CD4-positive, alpha-beta memory T cell (primary cell): ENCODE measurements at regions of chr12 and their contacts with region 1.

Region 1: DNA sequence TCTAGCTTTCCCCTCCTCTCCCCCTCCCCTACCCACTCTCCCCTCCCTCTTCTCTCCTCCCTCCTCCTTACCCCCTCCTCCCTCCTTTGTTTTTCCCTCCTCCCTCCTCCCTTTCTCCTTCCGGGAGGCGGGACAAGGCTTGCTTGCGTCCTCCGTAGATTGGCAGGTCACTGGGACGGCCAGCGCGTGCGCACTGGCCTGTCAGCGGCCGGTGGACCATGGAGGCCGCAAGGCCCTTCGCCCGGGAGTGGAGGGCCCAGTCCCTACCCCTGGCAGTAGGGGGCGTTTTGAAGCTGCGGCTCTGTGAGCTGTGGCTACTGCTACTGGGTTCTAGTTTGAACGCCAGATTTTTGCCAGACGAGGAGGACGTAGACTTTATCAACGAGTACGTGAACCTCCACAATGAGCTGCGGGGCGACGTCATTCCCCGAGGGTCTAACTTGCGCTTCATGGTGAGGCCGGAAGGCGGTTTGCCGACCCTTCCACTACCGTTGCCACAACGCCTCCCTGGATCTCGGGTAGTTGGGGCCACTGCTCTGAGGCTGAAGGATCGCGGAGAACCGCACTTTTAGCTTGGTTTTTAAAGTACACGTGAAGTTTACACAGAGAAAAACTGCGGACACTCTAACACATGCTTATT is at the start of gene GLIPR1L2:
- DNase-seq: peak; percentile 82 to 86 (median 84)
- H3K4me3 ChIP-seq: peak within 1 kb of the TSS; percentile 69 to 74
- H3K4me3 Mint-ChIP-seq: peak within 1 kb of the TSS; percentile 90 to 97 (median 93)
- H3K27ac ChIP-seq: peak within 1 kb of the TSS; percentile 74
- H3K27ac Mint-ChIP-seq: peak within 1 kb of the TSS; percentile 96 to 99 (median 97)
- H3K4me1 ChIP-seq: peaks cover 56% of the 10 kb centered on the region
- H3K4me1 Mint-ChIP-seq: peaks cover 38 to 71% (median 51%) of the 10 kb centered on the region in 4 donors
- H3K27me3 ChIP-seq: no peaks in the 10 kb centered on the region
- H3K27me3 Mint-ChIP-seq: no peaks in the 10 kb centered on the region
- total RNA-seq, gene GLIPR1L2: 0.47 to 0.55 TPM

Region 2: DNA sequence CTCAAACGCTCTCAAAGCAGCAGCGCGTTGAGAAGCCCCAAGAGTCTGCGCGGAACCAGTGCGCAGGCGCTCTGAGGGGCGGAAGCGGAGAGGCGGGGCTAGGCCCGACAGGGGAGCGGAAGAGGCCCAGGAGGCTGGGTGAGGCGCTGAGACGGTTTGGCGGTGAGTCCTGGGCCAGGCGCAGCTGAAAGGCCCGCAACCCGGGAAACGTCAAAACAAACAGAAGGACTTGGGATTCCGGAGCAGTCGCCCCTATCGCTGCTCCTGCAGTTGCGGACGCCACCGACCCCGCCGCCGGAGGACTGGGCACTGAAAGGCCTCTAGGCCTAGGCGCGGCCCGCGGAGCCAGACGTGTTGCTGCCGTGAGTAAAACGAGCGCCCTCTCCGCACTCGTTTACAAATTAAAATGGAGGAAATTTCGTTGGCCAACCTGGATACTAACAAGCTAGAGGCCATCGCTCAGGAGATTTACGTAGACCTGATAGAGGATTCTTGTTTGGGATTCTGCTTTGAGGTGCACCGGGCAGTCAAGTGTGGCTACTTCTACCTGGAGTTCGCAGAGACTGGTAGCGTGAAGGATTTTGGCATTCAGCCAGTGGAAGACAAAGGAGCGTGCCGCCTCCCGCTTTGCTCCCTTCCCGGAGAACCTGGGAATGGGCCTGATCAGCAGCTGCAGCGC is 853.2 kb before region 1 on chr12 and contains the start of gene ATXN7L3B:
- CTCF ChIA-PET with region 1: no interaction called
- POLR2A ChIA-PET with region 1: interaction called, 3 read pairs
- intact Hi-C with region 1: loop called (anchors 5 kb)
- DNase-seq: peak; percentile 95 to 97 (median 97)
- H3K4me3 ChIP-seq: peak within 1 kb of the TSS; percentile 92 to 99
- H3K4me3 Mint-ChIP-seq: peak within 1 kb of the TSS; percentile 81 to 99 (median 96)
- H3K27ac ChIP-seq: peak within 1 kb of the TSS; percentile 95
- H3K27ac Mint-ChIP-seq: peak within 1 kb of the TSS; percentile 97 to 100 (median 99)
- H3K4me1 ChIP-seq: peaks cover 48% of the 10 kb centered on the region
- H3K4me1 Mint-ChIP-seq: peaks cover 39 to 60% (median 49%) of the 10 kb centered on the region in 4 donors
- H3K27me3 ChIP-seq: no peaks in the 10 kb centered on the region
- H3K27me3 Mint-ChIP-seq: no peaks in the 10 kb centered on the region
- total RNA-seq, gene ATXN7L3B: 45.1 to 46.2 TPM

Region 3: GRCh38 chr12:75407683-75408082 is 16.7 kb after region 1 on chr12:
- CTCF ChIA-PET with region 1: interaction called, 11 read pairs
- POLR2A ChIA-PET with region 1: interaction called, 3 read pairs
- intact Hi-C with region 1: no loop called
- DNase-seq: no peak
- H3K4me3 ChIP-seq: no peak overlapping the region
- H3K4me3 Mint-ChIP-seq: no peak overlapping the region
- H3K27ac ChIP-seq: no peak overlapping the region
- H3K27ac Mint-ChIP-seq: no peak overlapping the region
- H3K4me1 ChIP-seq: no peaks in the 10 kb centered on the region
- H3K4me1 Mint-ChIP-seq: no peaks in the 10 kb centered on the region
- H3K27me3 ChIP-seq: no peaks in the 10 kb centered on the region
- H3K27me3 Mint-ChIP-seq: peaks cover 0 to 6% of the 10 kb centered on the region in 2 donors

Region 4: DNA sequence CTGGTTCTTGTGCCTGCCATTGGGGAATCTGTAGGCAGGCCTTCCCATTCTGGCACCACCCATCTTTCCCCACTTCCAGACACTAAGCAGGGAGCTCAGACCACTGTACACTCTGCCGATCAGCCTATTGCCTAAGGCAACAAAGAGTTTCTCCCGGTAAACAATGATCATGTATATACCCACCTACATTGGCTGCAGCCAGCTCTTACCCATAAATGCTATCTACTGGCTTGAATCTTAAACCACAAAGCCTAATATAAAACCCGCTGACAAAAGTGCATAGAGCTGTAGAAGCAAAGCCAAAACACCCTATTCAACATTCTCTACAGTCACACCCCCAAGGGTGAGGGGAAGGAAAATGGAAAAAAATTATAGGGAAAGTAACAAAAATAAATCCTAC is 68.7 kb after region 1 on chr12:
- CTCF ChIA-PET with region 1: interaction called, 12 read pairs
- POLR2A ChIA-PET with region 1: interaction called, 4 read pairs
- intact Hi-C with region 1: no loop called
- DNase-seq: no peak
- H3K4me3 ChIP-seq: peak overlapping the region in 1 of 2 donors; percentile 11
- H3K4me3 Mint-ChIP-seq: peak overlapping the region in 7 of 8 donors; percentile 19 to 79 (median 64)
- H3K27ac ChIP-seq: no peak overlapping the region
- H3K27ac Mint-ChIP-seq: peak overlapping the region; percentile 2 to 88 (median 72)
- H3K4me1 ChIP-seq: peaks cover 48% of the 10 kb centered on the region
- H3K4me1 Mint-ChIP-seq: peaks cover 42 to 70% (median 55%) of the 10 kb centered on the region in 4 donors
- H3K27me3 ChIP-seq: no peaks in the 10 kb centered on the region
- H3K27me3 Mint-ChIP-seq: no peaks in the 10 kb centered on the region

Region 5: GRCh38 chr12:75505706-75506312 is 114.8 kb after region 1 on chr12:
- CTCF ChIA-PET with region 1: interaction called, 15 read pairs
- POLR2A ChIA-PET with region 1: interaction called, 35 read pairs
- intact Hi-C with region 1: loop called (anchors 1 kb)
- DNase-seq: peak in 4 of 5 donors; percentile 28 to 37 (median 36)
- H3K4me3 ChIP-seq: no peak overlapping the region
- H3K4me3 Mint-ChIP-seq: no peak overlapping the region
- H3K27ac ChIP-seq: no peak overlapping the region
- H3K27ac Mint-ChIP-seq: peak overlapping the region; percentile 12 to 64 (median 52)
- H3K4me1 ChIP-seq: peaks cover 19% of the 10 kb centered on the region
- H3K4me1 Mint-ChIP-seq: peaks cover 22 to 30% (median 25%) of the 10 kb centered on the region in 4 donors
- H3K27me3 ChIP-seq: no peaks in the 10 kb centered on the region
- H3K27me3 Mint-ChIP-seq: no peaks in the 10 kb centered on the region

Region 6: GRCh38 chr12:76548222-76548837 is 1157.3 kb after region 1 on chr12:
- CTCF ChIA-PET with region 1: no interaction called
- POLR2A ChIA-PET with region 1: no interaction called
- intact Hi-C with region 1: no loop called
- DNase-seq: no peak
- H3K4me3 ChIP-seq: no peak overlapping the region
- H3K4me3 Mint-ChIP-seq: peak overlapping the region in 6 of 8 donors; percentile 6 to 55 (median 30)
- H3K27ac ChIP-seq: no peak overlapping the region
- H3K27ac Mint-ChIP-seq: peak overlapping the region in 2 of 7 donors; percentile 7 to 62
- H3K4me1 ChIP-seq: peaks cover 92% of the 10 kb centered on the region
- H3K4me1 Mint-ChIP-seq: peaks cover 64 to 94% (median 82%) of the 10 kb centered on the region in 4 donors
- H3K27me3 ChIP-seq: no peaks in the 10 kb centered on the region
- H3K27me3 Mint-ChIP-seq: no peaks in the 10 kb centered on the region

Region 7: DNA sequence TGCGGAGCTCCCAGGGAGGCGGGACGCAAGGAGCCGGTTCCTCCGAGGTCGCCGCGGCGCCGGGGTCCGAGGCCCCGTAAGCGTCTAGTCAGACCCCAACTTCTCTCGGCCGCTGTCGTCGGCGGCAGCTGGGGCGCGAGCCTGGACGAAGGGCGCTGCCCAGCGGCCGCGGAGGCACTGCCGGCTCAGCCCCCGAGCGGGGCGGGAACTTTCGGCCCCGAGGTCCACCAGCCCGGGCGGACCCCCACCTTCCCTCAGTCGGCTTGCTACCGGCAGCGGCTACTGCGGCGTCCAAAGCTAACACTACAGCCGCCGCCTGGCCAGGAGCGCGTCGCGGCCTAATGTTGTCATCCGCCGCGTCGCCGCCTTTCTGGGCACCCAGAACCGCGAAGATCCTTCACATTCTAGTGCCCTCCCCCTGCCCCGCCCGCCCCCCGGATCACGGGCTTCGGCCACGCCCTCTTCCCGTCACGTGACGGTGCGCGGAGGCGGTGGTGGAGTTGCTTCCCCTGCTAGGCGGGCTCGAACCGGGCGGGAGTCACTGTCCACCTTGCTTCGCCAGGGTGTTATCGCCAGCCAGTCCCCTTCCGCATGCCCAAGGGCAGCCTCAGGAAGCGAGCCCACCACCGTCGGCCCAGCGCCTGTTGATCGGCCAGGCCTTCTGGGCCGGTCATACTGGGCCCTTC is 1168.5 kb after region 1 on chr12 and contains the start of gene OSBPL8:
- CTCF ChIA-PET with region 1: no interaction called
- POLR2A ChIA-PET with region 1: interaction called, 6 read pairs
- intact Hi-C with region 1: loop called (anchors 2 kb)
- DNase-seq: peak; percentile 89 to 94 (median 90)
- H3K4me3 ChIP-seq: peak within 1 kb of the TSS; percentile 95
- H3K4me3 Mint-ChIP-seq: peak within 1 kb of the TSS; percentile 96 to 97 (median 96)
- H3K27ac ChIP-seq: peak within 1 kb of the TSS; percentile 89
- H3K27ac Mint-ChIP-seq: peak within 1 kb of the TSS; percentile 94 to 99 (median 98)
- H3K4me1 ChIP-seq: peaks cover 46% of the 10 kb centered on the region
- H3K4me1 Mint-ChIP-seq: peaks cover 24 to 52% (median 31%) of the 10 kb centered on the region in 4 donors
- H3K27me3 ChIP-seq: no peaks in the 10 kb centered on the region
- H3K27me3 Mint-ChIP-seq: no peaks in the 10 kb centered on the region
- total RNA-seq, gene OSBPL8: 126 to 127 TPM